Activated T-helper 1 cell treated with anti-CD3 and anti-CD28 coated beads, Interleukin-12 subunit alpha, Interleukin-12 subunit beta, Interleukin-2, Interleukin-4 antibody, amounts not matched to agents 30 ng/mL and 10 ng/mL and 1 ng/mL, durations not matched to agents 14 hours and 24 hours and 36 hours (primary cell): ENCODE measurements at regions of chr11 and their contacts with region 1.

Region 1: GRCh38 chr11:26276798-26277424 is 55.0 kb upstream of the ANO3 start:
- DNase-seq: peak; percentile 3
- H3K4me3 Mint-ChIP-seq: no peak overlapping the region
- H3K27ac Mint-ChIP-seq: no peak overlapping the region
- H3K4me1 Mint-ChIP-seq: no peaks in the 10 kb centered on the region
- H3K27me3 Mint-ChIP-seq: no peaks in the 10 kb centered on the region

Region 2: DNA sequence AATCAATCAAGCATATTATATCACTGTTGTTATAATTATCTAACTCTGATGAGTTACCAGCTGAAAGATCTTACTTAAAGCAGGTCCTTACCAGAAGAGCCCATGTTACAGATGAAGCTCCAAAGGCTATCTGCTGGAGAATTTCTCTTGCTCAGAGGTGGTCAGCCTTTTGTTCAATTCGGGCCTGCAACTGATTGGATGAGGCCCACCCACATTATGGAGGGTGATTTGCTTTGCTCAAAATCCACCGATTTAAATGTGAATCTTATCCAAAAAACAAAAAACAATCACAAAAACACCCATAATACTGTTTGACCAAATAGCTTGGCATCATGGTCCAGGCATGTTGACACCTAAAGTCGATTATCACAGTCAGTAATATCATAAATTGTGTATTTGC is 293.6 kb before region 1 on chr11:
- intact Hi-C with region 1: loop called (anchors 1 kb)
- DNase-seq: no peak
- H3K4me3 Mint-ChIP-seq: no peak overlapping the region
- H3K27ac Mint-ChIP-seq: no peak overlapping the region
- H3K4me1 Mint-ChIP-seq: no peaks in the 10 kb centered on the region
- H3K27me3 Mint-ChIP-seq: no peaks in the 10 kb centered on the region

Region 3: GRCh38 chr11:26219183-26220117 is 57.5 kb before region 1 on chr11:
- intact Hi-C with region 1: no loop called
- DNase-seq: no peak
- H3K4me3 Mint-ChIP-seq: no peak overlapping the region
- H3K27ac Mint-ChIP-seq: no peak overlapping the region
- H3K4me1 Mint-ChIP-seq: no peaks in the 10 kb centered on the region
- H3K27me3 Mint-ChIP-seq: no peaks in the 10 kb centered on the region

Region 4: GRCh38 chr11:26231252-26231661 is 45.7 kb before region 1 on chr11:
- intact Hi-C with region 1: no loop called
- DNase-seq: no peak
- H3K4me3 Mint-ChIP-seq: no peak overlapping the region
- H3K27ac Mint-ChIP-seq: no peak overlapping the region
- H3K4me1 Mint-ChIP-seq: no peaks in the 10 kb centered on the region
- H3K27me3 Mint-ChIP-seq: no peaks in the 10 kb centered on the region